Activated CD4-positive, alpha-beta T cell treated with anti-CD3 and anti-CD28 coated beads, Interleukin-2, amount 10 ng/mL, durations not matched to agents 24 days and 14 days (primary cell): ENCODE measurements at regions of chr22 and their contacts with region 1.

Region 1: DNA sequence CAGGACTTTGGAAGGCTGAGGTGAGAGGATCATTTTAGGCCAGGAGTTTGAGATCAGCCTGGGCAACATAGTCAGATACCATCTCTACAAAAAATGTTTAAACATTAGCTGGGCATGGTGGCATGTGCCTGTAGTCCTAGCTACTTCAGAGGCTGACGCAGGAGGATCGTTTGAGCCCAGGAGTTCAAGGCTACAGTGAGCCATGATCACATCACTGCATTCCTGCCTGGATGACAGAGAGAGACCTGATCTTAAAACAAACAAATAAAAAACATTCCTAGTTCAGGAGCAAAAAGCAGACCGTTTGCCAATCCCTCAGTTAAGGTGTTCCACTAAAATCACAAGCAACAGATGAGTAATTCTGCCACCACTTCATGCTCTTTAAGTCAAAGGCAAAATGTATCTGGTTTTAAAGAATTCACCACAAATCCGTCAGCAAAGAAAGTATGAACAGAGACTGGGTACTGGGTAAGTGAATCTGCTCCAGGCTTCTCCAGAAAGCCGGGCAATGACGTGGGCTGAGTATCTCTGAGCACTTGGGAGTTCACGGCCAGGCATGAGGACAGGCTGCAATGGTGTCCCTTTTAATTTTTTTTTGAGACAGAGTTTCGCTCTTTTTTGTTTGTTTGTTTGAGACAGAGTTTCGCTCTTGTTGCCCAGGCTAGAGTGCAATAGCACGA is 19.5 kb downstream of the CLTCL1 start:
- DNase-seq: no peak
- H3K4me3 Mint-ChIP-seq: no peak overlapping the region
- H3K27ac Mint-ChIP-seq: no peak overlapping the region
- H3K4me1 Mint-ChIP-seq: no peaks in the 10 kb centered on the region
- H3K27me3 Mint-ChIP-seq: peaks cover 9% of the 10 kb centered on the region

Region 2: GRCh38 chr22:19194766-19195541 is 77.0 kb before region 1 on chr22:
- intact Hi-C with region 1: no loop called
- DNase-seq: no peak
- H3K4me3 Mint-ChIP-seq: no peak overlapping the region
- H3K27ac Mint-ChIP-seq: no peak overlapping the region
- H3K4me1 Mint-ChIP-seq: peaks cover 9% of the 10 kb centered on the region
- H3K27me3 Mint-ChIP-seq: peaks cover 8% of the 10 kb centered on the region

Region 3: DNA sequence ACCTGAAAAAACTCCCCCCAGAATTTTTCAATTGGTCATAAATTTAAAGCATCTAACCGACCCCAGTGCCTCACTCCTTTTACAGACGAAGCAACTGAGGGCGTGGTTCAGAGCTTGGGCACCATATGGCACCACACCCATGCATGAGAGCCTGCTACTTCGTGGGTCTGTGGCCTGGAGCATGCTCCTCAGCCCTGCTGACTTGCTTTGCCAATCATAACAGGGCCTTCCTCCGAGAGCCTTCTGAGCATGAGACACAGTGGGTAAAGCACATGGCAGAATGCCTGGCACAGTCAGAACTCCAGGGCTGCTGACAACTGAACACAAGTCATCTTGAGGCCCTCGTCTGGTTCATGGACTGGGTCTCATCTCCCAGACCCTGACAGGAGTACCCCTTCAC is 126.2 kb after region 1 on chr22:
- intact Hi-C with region 1: loop called (anchors 5 kb)
- DNase-seq: no peak
- H3K4me3 Mint-ChIP-seq: no peak overlapping the region
- H3K27ac Mint-ChIP-seq: no peak overlapping the region
- H3K4me1 Mint-ChIP-seq: no peaks in the 10 kb centered on the region
- H3K27me3 Mint-ChIP-seq: no peaks in the 10 kb centered on the region